Mammary epithelial cell (primary cell): ENCODE measurements at regions of chr9 and their contacts with region 1.

Region 1: DNA sequence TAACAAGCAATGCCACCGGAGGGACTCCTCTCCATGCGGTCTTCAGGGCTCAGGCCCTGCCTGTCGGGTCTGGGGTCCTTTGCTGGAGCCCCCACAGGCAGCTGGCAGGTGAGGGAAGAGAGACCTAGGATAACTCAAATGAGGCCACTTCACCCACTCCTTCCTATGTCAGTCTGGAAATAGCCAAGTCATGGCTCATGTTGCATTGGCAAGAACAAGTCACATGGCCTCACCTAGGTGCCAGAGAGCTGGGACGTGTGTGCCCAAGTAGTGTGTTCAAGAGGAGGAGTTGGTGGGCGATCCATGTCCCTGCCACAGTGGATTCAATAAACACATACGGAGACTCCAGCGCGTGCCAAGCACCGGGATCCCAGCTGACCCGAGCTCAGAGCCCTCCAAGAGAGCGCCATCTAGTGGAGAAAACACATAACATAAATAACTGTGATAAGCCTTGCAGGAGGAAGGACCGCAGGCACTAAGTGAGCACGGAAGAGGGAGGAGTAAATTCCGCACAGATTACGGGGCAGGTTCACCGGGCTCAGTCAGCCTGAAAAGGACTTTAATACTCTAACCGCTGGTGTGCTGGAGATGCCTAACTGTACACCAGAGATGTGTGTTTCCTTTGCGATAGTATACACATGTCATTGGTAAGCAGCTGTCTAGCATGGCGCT is 580.8 kb downstream of the CCDC171 start:
- DNase-seq: peak; percentile 28
- H3K4me3 ChIP-seq: no peak overlapping the region
- H3K27ac ChIP-seq: no peak overlapping the region
- H3K4me1 ChIP-seq: peaks cover 3% of the 10 kb centered on the region
- H3K27me3 ChIP-seq: no peaks in the 10 kb centered on the region
- CTCF ChIP-seq: peak; percentile 42 to 58

Region 2: DNA sequence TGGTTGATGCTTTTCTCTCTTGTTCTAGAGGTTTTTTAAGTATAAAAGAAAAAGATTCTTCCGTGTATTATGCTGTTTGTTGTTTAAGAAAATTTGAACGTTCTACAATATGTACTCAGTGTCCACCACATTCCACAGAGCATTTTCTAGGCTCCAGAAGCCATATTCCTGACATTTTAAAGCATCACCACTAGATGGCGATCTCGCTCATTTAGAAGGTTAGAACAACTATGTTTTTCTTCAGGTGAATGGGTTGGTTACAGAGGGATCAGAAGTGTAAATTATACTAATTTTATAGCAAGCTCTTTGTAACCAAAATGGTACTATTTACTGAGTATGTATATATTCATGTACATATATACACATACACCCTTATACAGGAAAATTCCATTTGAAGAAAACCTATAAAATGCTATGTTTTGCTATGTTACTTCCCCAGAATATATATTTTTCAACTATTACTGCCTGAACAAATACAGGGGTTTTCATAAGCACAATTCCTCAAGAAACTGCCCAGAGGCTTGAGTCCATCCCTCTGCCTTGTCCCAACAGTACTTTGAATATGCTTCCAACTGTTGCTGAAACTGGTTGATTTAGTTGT is 296.5 kb before region 1 on chr9:
- CTCF ChIA-PET with region 1: no interaction called
- dilution Hi-C with region 1: no loop called
- in situ Hi-C with region 1: no loop called
- intact Hi-C with region 1: loop called (anchors 1 kb)
- DNase-seq: peak; percentile 45
- H3K4me3 ChIP-seq: no peak overlapping the region
- H3K27ac ChIP-seq: no peak overlapping the region
- H3K4me1 ChIP-seq: no peaks in the 10 kb centered on the region
- H3K27me3 ChIP-seq: no peaks in the 10 kb centered on the region
- CTCF ChIP-seq: peak; percentile 77 to 90

Region 3: DNA sequence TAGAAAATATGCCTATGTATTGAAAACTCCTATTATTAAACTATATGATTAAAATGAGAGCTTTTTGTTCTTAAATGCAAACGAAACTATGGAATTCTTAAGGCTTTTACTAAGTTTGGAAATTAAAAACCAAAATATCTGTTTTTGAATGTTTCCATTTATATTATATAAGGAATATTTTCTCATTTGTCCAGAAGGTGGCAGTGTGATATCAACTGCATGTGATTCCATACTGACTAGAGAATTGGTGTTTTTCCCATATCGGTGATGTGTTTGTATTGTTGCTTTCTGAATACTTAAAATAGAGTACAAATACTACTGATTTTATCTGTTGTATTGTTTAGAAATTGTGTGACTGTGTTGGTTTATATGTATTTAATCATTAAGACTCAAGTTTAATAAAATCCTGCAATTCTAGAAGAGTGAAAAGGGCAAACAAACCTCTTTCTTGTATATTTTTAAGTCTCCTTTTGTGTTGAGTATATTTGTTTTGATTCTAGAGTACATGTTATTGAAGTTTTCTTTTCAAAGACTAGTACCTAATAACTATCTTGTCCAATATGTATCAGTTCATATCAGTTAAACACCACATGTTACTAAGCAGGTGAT is 260.0 kb before region 1 on chr9:
- CTCF ChIA-PET with region 1: interaction called, 3 read pairs
- dilution Hi-C with region 1: no loop called
- in situ Hi-C with region 1: no loop called
- intact Hi-C with region 1: loop called (anchors 1 kb)
- DNase-seq: peak; percentile 30
- H3K4me3 ChIP-seq: no peak overlapping the region
- H3K27ac ChIP-seq: peak overlapping the region; percentile 5
- H3K4me1 ChIP-seq: no peaks in the 10 kb centered on the region
- H3K27me3 ChIP-seq: no peaks in the 10 kb centered on the region
- CTCF ChIP-seq: peak; percentile 53 to 68

Region 4: DNA sequence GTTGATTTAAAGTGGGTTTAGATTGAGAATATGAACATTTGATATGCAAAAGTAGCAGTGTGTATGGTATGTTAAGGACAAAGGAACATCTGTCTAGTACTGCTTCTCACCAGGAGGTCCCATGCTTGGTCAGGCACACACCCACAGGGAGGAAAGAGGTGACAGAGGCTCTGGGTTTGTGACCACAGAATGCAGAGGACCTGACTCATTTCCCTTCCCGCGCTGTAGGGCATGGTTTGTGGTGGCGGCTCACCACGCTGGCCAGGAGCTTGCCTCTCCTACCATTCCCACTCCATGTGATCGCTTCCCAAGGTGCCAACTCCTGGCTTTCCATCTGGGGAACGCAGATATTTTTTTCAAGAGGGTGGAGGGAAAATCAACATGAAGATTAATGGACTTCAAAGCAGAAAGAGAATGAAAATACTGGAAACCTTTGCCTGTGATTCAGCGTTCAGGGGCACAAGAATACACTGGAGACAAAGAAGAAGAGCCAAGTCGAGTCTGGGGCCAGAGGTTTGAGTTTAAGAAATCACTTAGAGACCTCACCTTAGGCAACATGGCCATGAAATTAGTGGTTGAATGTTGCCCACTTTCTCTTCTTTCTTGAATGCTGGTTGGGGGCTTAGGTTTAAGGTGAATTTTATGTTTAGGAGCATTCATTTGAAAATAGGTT is 103.0 kb before region 1 on chr9:
- CTCF ChIA-PET with region 1: no interaction called
- dilution Hi-C with region 1: no loop called
- in situ Hi-C with region 1: no loop called
- intact Hi-C with region 1: loop called (anchors 10 kb)
- DNase-seq: peak; percentile 91
- H3K4me3 ChIP-seq: no peak overlapping the region
- H3K27ac ChIP-seq: no peak overlapping the region
- H3K4me1 ChIP-seq: peaks cover 35% of the 10 kb centered on the region
- H3K27me3 ChIP-seq: no peaks in the 10 kb centered on the region
- CTCF ChIP-seq: no peak

Region 5: GRCh38 chr9:16062542-16063240 is 71.0 kb before region 1 on chr9:
- CTCF ChIA-PET with region 1: no interaction called
- dilution Hi-C with region 1: no loop called
- in situ Hi-C with region 1: no loop called
- intact Hi-C with region 1: loop called (anchors 5 kb)
- DNase-seq: peak; percentile 99
- H3K4me3 ChIP-seq: no peak overlapping the region
- H3K27ac ChIP-seq: peak overlapping the region; percentile 90
- H3K4me1 ChIP-seq: peaks cover 51% of the 10 kb centered on the region
- H3K27me3 ChIP-seq: no peaks in the 10 kb centered on the region
- CTCF ChIP-seq: no peak

Region 6: GRCh38 chr9:16247188-16247875 is 113.6 kb after region 1 on chr9:
- CTCF ChIA-PET with region 1: no interaction called
- dilution Hi-C with region 1: no loop called
- in situ Hi-C with region 1: no loop called
- intact Hi-C with region 1: no loop called
- DNase-seq: peak; percentile 42
- H3K4me3 ChIP-seq: no peak overlapping the region
- H3K27ac ChIP-seq: no peak overlapping the region
- H3K4me1 ChIP-seq: peaks cover 5% of the 10 kb centered on the region
- H3K27me3 ChIP-seq: no peaks in the 10 kb centered on the region
- CTCF ChIP-seq: no peak

Region 7: GRCh38 chr9:17453751-17454150 is 1320.1 kb after region 1 on chr9:
- CTCF ChIA-PET with region 1: no interaction called
- dilution Hi-C with region 1: no loop called
- in situ Hi-C with region 1: no loop called
- intact Hi-C with region 1: no loop called
- DNase-seq: no peak
- H3K4me3 ChIP-seq: no peak overlapping the region
- H3K27ac ChIP-seq: no peak overlapping the region
- H3K4me1 ChIP-seq: no peaks in the 10 kb centered on the region
- H3K27me3 ChIP-seq: no peaks in the 10 kb centered on the region
- CTCF ChIP-seq: no peak